CD8-positive, alpha-beta T cell (primary cell): ENCODE measurements at regions of chr2 and their contacts with region 1.

Region 1: DNA sequence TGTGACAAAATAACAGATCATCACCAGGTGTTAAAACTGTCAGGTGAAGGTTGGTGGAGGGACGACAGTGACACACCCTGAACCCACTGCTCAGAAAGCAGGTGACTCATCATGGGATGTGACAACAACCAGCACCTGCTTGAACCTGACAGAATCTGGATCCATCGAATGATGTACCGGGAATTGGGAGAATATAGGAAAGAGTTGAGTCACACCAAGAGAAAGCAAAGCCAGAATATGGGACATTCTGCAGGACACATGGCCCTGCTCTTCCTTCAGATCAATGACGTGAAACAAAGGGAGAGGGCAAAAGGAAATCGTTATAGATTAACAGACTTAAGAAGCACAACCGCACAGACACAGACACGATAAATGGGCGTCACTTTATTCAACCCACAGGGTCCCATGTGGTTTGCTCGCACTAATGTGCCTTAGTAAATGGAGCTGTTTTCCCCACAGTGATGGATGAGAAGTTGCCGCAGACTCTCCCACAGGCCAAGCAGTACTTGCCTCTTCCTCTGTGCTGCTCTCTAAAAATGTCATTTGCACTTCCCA is 100.1 kb downstream of the CRACDL start:
- DNase-seq: peak in 8 of 9 experiments; percentile 34 to 90 (median 67)
- ATAC-seq: peak; percentile 82
- H3K4me3 ChIP-seq: no peak overlapping the region
- H3K4me3 Mint-ChIP-seq: peak overlapping the region; percentile 55
- H3K27ac ChIP-seq: peak overlapping the region; percentile 25 to 61
- H3K27ac Mint-ChIP-seq: peak overlapping the region; percentile 93
- H3K4me1 ChIP-seq: peaks cover 26% of the 10 kb centered on the region
- H3K4me1 Mint-ChIP-seq: peaks cover 42% of the 10 kb centered on the region
- H3K27me3 ChIP-seq: no peaks in the 10 kb centered on the region
- H3K27me3 Mint-ChIP-seq: no peaks in the 10 kb centered on the region
- CTCF ChIP-seq: no peak

Region 2: GRCh38 chr2:98412751-98413458 is 423.0 kb before region 1 on chr2:
- CTCF ChIA-PET with region 1: interaction called, 7 read pairs
- POLR2A ChIA-PET with region 1: no interaction called
- intact Hi-C with region 1: loop called (anchors 1 to 5 kb)
- DNase-seq: peak; percentile 25 to 85 (median 54)
- ATAC-seq: peak; percentile 85
- H3K4me3 ChIP-seq: no peak overlapping the region
- H3K4me3 Mint-ChIP-seq: no peak overlapping the region
- H3K27ac ChIP-seq: no peak overlapping the region
- H3K27ac Mint-ChIP-seq: no peak overlapping the region
- H3K4me1 ChIP-seq: peaks cover 5% of the 10 kb centered on the region
- H3K4me1 Mint-ChIP-seq: peaks cover 12% of the 10 kb centered on the region
- H3K27me3 ChIP-seq: no peaks in the 10 kb centered on the region
- H3K27me3 Mint-ChIP-seq: no peaks in the 10 kb centered on the region
- CTCF ChIP-seq: peak; percentile 91

Region 3: GRCh38 chr2:98560256-98560771 is 275.6 kb before region 1 on chr2:
- CTCF ChIA-PET with region 1: no interaction called
- POLR2A ChIA-PET with region 1: no interaction called
- intact Hi-C with region 1: no loop called
- DNase-seq: no peak
- ATAC-seq: no peak
- H3K4me3 ChIP-seq: no peak overlapping the region
- H3K4me3 Mint-ChIP-seq: no peak overlapping the region
- H3K27ac ChIP-seq: no peak overlapping the region
- H3K27ac Mint-ChIP-seq: peak overlapping the region; percentile 79
- H3K4me1 ChIP-seq: peaks cover 8% of the 10 kb centered on the region
- H3K4me1 Mint-ChIP-seq: peaks cover 41% of the 10 kb centered on the region
- H3K27me3 ChIP-seq: no peaks in the 10 kb centered on the region
- H3K27me3 Mint-ChIP-seq: no peaks in the 10 kb centered on the region
- CTCF ChIP-seq: no peak

Region 4: GRCh38 chr2:98608116-98608999 is 227.6 kb before region 1 on chr2 and contains the starts of genes COA5 and UNC50:
- CTCF ChIA-PET with region 1: interaction called, 4 read pairs
- POLR2A ChIA-PET with region 1: no interaction called
- intact Hi-C with region 1: loop called in 1 of 2 experiments (anchors 1 kb)
- DNase-seq: peak; percentile 84 to 95 (median 89)
- ATAC-seq: peak; percentile 81
- H3K4me3 ChIP-seq: peak within 1 kb of the TSS; percentile 84 to 94
- H3K4me3 Mint-ChIP-seq: peak within 1 kb of the TSS; percentile 89
- H3K27ac ChIP-seq: peak within 1 kb of the TSS; percentile 87 to 95
- H3K27ac Mint-ChIP-seq: peak within 1 kb of the TSS; percentile 95
- H3K4me1 ChIP-seq: peaks cover 48% of the 10 kb centered on the region
- H3K4me1 Mint-ChIP-seq: peaks cover 74% of the 10 kb centered on the region
- H3K27me3 ChIP-seq: no peaks in the 10 kb centered on the region
- H3K27me3 Mint-ChIP-seq: no peaks in the 10 kb centered on the region
- CTCF ChIP-seq: no peak
- total RNA-seq, gene COA5: 19.7 to 24.1 TPM
- total RNA-seq, gene UNC50: 12.5 to 14.4 TPM

Region 5: GRCh38 chr2:98649135-98649991 is 186.5 kb before region 1 on chr2:
- CTCF ChIA-PET with region 1: interaction called, 46 read pairs
- POLR2A ChIA-PET with region 1: interaction called, 8 read pairs
- intact Hi-C with region 1: loop called (anchors 1 kb)
- DNase-seq: peak; percentile 73 to 92 (median 83)
- ATAC-seq: peak; percentile 92
- H3K4me3 ChIP-seq: no peak overlapping the region
- H3K4me3 Mint-ChIP-seq: peak overlapping the region; percentile 37
- H3K27ac ChIP-seq: peak overlapping the region in 1 of 2 experiments; percentile 47
- H3K27ac Mint-ChIP-seq: peak overlapping the region; percentile 99
- H3K4me1 ChIP-seq: peaks cover 52% of the 10 kb centered on the region
- H3K4me1 Mint-ChIP-seq: peaks cover 63% of the 10 kb centered on the region
- H3K27me3 ChIP-seq: no peaks in the 10 kb centered on the region
- H3K27me3 Mint-ChIP-seq: no peaks in the 10 kb centered on the region
- CTCF ChIP-seq: peak; percentile 98

Region 6: GRCh38 chr2:98771721-98772524 is 64.0 kb before region 1 on chr2:
- CTCF ChIA-PET with region 1: interaction called, 4 read pairs
- POLR2A ChIA-PET with region 1: interaction called, 6 read pairs
- intact Hi-C with region 1: loop called (anchors 1 to 2 kb)
- DNase-seq: peak; percentile 36 to 93 (median 68)
- ATAC-seq: peak; percentile 68
- H3K4me3 ChIP-seq: peak overlapping the region; percentile 39 to 50
- H3K4me3 Mint-ChIP-seq: peak overlapping the region; percentile 87
- H3K27ac ChIP-seq: peak overlapping the region; percentile 79 to 89
- H3K27ac Mint-ChIP-seq: peak overlapping the region; percentile 98
- H3K4me1 ChIP-seq: peaks cover 67% of the 10 kb centered on the region
- H3K4me1 Mint-ChIP-seq: peaks cover 77% of the 10 kb centered on the region
- H3K27me3 ChIP-seq: no peaks in the 10 kb centered on the region
- H3K27me3 Mint-ChIP-seq: no peaks in the 10 kb centered on the region
- CTCF ChIP-seq: no peak

Region 7: GRCh38 chr2:99180755-99181623 is 345.1 kb after region 1 on chr2 and contains the starts of genes MITD1 and MRPL30:
- CTCF ChIA-PET with region 1: no interaction called
- POLR2A ChIA-PET with region 1: interaction called, 4 read pairs
- intact Hi-C with region 1: loop called in 1 of 2 experiments (anchors 5 kb)
- DNase-seq: peak; percentile 83 to 97 (median 91)
- ATAC-seq: peak; percentile 94
- H3K4me3 ChIP-seq: peak within 1 kb of the TSS; percentile 84 to 90
- H3K4me3 Mint-ChIP-seq: peak within 1 kb of the TSS; percentile 96
- H3K27ac ChIP-seq: peak within 1 kb of the TSS; percentile 85 to 88
- H3K27ac Mint-ChIP-seq: peak within 1 kb of the TSS; percentile 97
- H3K4me1 ChIP-seq: peaks cover 36% of the 10 kb centered on the region
- H3K4me1 Mint-ChIP-seq: peaks cover 69% of the 10 kb centered on the region
- H3K27me3 ChIP-seq: no peaks in the 10 kb centered on the region
- H3K27me3 Mint-ChIP-seq: no peaks in the 10 kb centered on the region
- CTCF ChIP-seq: no peak
- total RNA-seq, gene MITD1: 12.6 to 15.6 TPM
- total RNA-seq, gene MRPL30: 9.4 to 11.4 TPM